HepG2 (cell line): ENCODE measurements at regions of chr2 and their contacts with region 1.

Region 1: DNA sequence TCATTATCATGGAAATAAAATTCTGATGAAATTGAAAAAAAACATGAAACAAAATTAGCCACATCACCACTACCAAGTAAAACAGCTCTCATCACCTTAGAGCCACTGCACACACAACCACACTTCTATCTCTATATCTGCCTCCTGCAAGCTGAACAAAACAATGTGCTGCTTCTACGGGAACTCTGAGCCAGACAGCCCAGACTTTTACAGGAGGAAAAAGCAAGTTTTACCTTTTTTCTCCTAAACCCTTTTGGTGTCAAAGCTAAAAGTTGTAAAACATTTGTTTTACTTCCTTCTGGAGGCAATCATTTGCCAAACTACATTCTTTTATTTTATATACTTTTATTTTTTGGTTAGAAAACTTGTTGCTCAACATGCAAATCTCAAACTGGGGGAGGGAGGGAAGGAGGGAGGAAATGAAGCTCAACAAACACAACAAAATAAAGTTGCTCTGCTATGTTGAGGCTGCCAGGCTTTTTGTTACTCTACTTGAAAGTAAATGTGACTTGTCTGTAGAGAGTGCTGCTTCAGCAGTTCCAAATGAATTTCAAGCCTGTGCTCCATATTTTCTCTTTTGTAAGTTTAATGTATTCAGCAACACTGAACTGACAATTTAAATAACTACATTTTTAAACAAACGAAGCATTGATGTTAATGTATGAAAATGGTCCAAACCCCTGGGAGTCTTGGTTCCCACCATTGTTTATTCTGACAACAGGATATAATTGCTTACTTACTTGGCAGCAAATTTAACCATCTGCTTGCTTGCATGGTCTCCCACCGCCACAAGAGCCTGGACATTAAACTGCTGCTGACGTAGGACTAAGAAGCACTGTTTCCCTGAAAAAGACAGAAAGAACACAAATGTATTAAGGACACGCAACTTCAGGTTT is 24.5 kb downstream of the DARS1 start:
- DNase-seq: no peak
- ATAC-seq: no peak
- H3K4me3 ChIP-seq: no peak overlapping the region
- H3K27ac ChIP-seq: no peak overlapping the region
- H3K4me1 ChIP-seq: no peaks in the 10 kb centered on the region
- H3K27me3 ChIP-seq: no peaks in the 10 kb centered on the region
- CTCF ChIP-seq: no peak
- EP300 ChIP-seq: no peak
- POLR2A ChIP-seq: no peak
- RAD21 ChIP-seq: no peak

Region 2: DNA sequence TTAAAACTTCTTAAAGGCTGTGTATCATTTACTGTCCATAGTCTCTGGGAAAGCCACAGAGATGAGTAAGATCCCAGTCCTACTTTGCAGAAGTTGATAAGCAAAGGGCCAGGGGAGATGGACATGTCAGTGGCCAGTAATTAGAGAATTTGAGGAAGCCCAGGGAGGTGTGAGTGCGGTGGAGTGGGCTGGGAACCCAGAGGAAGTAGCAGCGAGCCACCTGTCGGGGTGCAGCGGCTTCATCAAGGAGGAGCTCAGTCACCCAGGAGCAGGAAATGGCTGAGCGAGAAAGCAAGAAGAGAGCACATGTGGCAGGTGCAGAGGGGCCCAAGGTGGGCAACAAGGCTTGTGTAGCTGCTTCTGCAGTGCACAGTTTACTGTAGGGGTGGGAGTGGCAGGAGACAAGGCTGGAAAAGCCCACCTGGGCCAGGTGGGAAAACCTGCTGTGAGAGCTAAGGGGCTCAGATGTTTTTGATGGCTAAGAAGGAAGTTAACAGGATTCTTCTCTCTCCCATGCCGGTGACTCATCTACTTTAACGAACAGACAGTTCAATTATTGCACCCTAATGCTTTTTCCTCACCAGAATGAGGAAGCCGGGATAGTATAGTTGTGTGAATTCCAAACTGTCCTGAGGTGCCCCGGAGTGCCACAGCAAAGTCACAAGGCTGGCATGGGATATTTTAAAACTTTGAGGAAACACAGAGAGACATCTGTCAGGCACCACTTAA is 1741.8 kb before region 1 on chr2:
- CTCF ChIA-PET with region 1: no interaction called
- POLR2A ChIA-PET with region 1: no interaction called
- in situ Hi-C with region 1: no loop called
- intact Hi-C with region 1: loop called (anchors 5 kb)
- DNase-seq: no peak
- ATAC-seq: no peak
- H3K4me3 ChIP-seq: no peak overlapping the region
- H3K27ac ChIP-seq: no peak overlapping the region
- H3K4me1 ChIP-seq: no peaks in the 10 kb centered on the region
- H3K27me3 ChIP-seq: no peaks in the 10 kb centered on the region
- CTCF ChIP-seq: no peak
- EP300 ChIP-seq: no peak
- POLR2A ChIP-seq: no peak
- RAD21 ChIP-seq: no peak